OCI-LY7 (cell line): ENCODE measurements at regions of chr3 and their contacts with region 1.

Region 1: GRCh38 chr3:114011059-114011797 is 45.1 kb downstream of the CCDC191 start:
- DNase-seq: peak; percentile 62
- H3K4me3 ChIP-seq: no peak overlapping the region
- H3K27ac ChIP-seq: peak overlapping the region; percentile 37
- H3K4me1 ChIP-seq: peaks cover 52% of the 10 kb centered on the region
- CTCF ChIP-seq: no peak

Region 2: DNA sequence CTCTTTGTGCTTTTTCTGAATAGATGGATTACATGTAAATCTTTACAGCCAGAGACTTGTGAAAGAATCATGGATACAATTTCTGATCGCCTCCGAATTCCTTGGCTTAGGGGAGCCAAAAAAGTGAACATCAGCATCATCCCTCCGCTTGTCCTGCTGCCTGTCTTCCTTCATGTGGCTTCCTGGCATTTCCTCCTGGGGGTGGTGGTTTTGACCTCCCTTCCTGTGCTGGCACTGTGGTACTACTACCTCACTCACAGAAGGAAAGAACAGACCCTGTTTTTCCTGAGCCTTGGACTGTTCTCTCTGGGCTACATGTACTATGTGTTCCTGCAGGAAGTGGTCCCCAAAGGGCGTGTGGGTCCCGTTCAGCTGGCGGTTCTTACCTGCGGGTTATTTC is 57.6 kb before region 1 on chr3:
- CTCF ChIA-PET with region 1: no interaction called
- POLR2A ChIA-PET with region 1: no interaction called
- intact Hi-C with region 1: no loop called
- DNase-seq: no peak
- H3K4me3 ChIP-seq: no peak overlapping the region
- H3K27ac ChIP-seq: no peak overlapping the region
- H3K4me1 ChIP-seq: peaks cover 14% of the 10 kb centered on the region
- CTCF ChIP-seq: no peak

Region 3: GRCh38 chr3:113981803-113982202 is 29.4 kb before region 1 on chr3:
- CTCF ChIA-PET with region 1: no interaction called
- POLR2A ChIA-PET with region 1: interaction called, 30 read pairs
- intact Hi-C with region 1: no loop called
- DNase-seq: peak; percentile 28
- H3K4me3 ChIP-seq: no peak overlapping the region
- H3K27ac ChIP-seq: no peak overlapping the region
- H3K4me1 ChIP-seq: peaks cover 25% of the 10 kb centered on the region
- CTCF ChIP-seq: no peak

Region 4: GRCh38 chr3:114645392-114645791 is 634.2 kb after region 1 on chr3:
- CTCF ChIA-PET with region 1: no interaction called
- POLR2A ChIA-PET with region 1: no interaction called
- intact Hi-C with region 1: no loop called
- DNase-seq: no peak
- H3K4me3 ChIP-seq: no peak overlapping the region
- H3K27ac ChIP-seq: no peak overlapping the region
- H3K4me1 ChIP-seq: no peaks in the 10 kb centered on the region
- CTCF ChIP-seq: no peak